K562 (cell line): ENCODE measurements at regions of chrX and their contacts with region 1.

Region 1: GRCh38 chrX:53422086-53422860 is at the start of gene SMC1A:
- DNase-seq: peak; percentile 87 to 98 (median 92)
- ATAC-seq: peak; percentile 94
- H3K4me3 ChIP-seq: peak within 1 kb of the TSS; percentile 90
- H3K27ac ChIP-seq: peak within 1 kb of the TSS; percentile 100
- H3K4me1 ChIP-seq: peaks cover 4 to 9% of the 10 kb centered on the region in 2 experiments; a peak in 4 of 5 replicates
- H3K27me3 ChIP-seq: no peaks in the 10 kb centered on the region
- CTCF ChIP-seq: no peak
- EP300 ChIP-seq: no peak
- POLR2A ChIP-seq: peak; percentile 94
- RAD21 ChIP-seq: no peak
- polyA plus RNA-seq, gene SMC1A: 28.5 to 43.6 TPM

Region 2: DNA sequence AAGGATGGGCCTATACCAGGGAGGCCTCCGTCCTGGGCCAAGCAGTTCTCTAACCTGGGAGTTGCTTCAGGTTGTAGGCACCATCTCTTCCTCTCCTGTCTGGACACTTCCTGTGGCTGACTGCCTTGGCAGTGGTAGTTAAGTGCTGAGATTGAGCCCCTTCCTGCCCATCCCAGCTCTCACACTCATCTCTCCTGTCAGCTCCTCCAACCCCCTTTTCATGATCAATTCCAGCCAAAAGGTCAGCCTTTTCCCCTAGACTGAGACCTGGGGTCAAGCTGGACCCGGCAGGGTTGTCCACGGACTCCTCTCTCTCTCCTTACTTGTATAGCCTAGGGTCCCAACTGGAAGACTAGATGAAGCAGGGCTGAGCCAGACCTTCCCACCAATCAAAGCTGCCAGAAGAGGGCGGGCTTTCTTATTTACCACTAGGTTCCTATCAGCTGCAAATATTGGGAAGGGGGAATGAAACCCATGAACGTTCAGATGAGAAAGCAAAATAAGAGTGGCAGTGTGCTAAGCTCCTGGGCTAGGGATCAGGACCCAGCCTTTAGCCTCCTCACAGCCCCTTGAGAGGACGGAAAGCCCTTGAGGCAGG is 231.8 kb before region 1 on chrX:
- CTCF ChIA-PET with region 1: no interaction called
- POLR2A ChIA-PET with region 1: no interaction called
- in situ Hi-C with region 1: no loop called
- intact Hi-C with region 1: no loop called
- DNase-seq: peak; percentile 40 to 49 (median 42)
- ATAC-seq: peak; percentile 82
- H3K4me3 ChIP-seq: no peak overlapping the region
- H3K27ac ChIP-seq: no peak overlapping the region
- H3K4me1 ChIP-seq: peaks cover 0 to 6% of the 10 kb centered on the region in 2 experiments; a peak in 2 of 5 replicates
- H3K27me3 ChIP-seq: no peaks in the 10 kb centered on the region
- CTCF ChIP-seq: peak; percentile 24 to 59 (median 50); a peak in 4 of 6 replicates
- EP300 ChIP-seq: no peak
- POLR2A ChIP-seq: peak; percentile 64; the same call in 1 of the 2 replicates
- RAD21 ChIP-seq: no peak

Region 3: GRCh38 chrX:53433651-53434639 is 11.7 kb after region 1 on chrX and contains the start of gene HSD17B10:
- CTCF ChIA-PET with region 1: no interaction called
- POLR2A ChIA-PET with region 1: interaction called, 17 read pairs
- in situ Hi-C with region 1: no loop called
- intact Hi-C with region 1: no loop called
- DNase-seq: peak; percentile 93 to 95 (median 93)
- ATAC-seq: peak; percentile 99
- H3K4me3 ChIP-seq: peak within 1 kb of the TSS; percentile 69
- H3K27ac ChIP-seq: peak within 1 kb of the TSS; percentile 72
- H3K4me1 ChIP-seq: peaks cover 5 to 16% of the 10 kb centered on the region in 2 experiments; a peak in 3 of 5 replicates
- H3K27me3 ChIP-seq: no peaks in the 10 kb centered on the region
- CTCF ChIP-seq: no peak
- EP300 ChIP-seq: no peak
- POLR2A ChIP-seq: peak; percentile 89
- RAD21 ChIP-seq: no peak
- polyA plus RNA-seq, gene HSD17B10: 45.3 to 67.9 TPM